ENCODE measurements at regions of chr17 and their contacts with region 1.

Region 1: DNA sequence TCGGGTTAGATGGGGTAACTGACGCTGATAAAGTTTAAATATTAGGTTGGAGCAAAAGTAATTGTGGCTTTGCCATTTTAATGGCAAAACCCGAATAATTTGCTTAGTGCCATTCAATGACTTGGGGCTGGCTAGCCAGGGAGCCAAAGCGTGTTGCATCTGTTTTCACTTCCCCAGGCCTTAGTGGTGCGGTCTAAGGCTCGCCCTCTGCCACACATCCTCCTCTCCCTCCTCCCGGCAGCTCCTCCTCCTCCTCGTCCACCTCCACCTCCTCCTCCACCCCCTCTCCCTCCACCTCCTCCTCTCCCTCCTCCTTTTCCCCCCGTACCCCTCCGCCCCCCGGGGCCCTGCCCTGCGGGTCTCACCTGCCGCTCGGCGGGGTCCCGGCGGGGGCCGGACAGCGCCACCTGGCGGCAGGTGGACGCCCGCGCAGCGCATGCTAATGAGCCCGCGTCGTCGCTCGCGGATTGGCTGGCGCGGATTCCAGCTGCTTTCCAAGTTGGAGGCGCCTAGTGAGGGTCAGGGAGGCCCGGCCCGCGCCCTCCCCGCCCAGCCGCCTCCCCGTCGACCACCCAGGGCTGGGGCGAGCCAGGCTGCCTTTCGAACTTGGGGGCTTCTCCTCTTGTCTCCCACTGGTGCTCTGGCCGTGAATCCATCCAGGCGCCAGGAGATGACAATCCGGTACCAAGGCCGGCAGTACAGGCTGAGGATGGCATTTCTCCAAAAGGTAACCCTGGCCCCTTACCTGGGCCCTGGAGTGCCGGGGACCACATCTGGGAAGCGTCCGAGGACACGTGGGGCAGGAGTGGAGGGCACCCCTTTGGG is 36.6 kb upstream of the RGS9 start:
- DNase-seq: peak; percentile 88 to 94 (median 91)
- H3K4me3 ChIP-seq: peak overlapping the region; percentile 50
- H3K27ac ChIP-seq: peak overlapping the region; percentile 41 to 69
- H3K4me1 ChIP-seq: peaks cover 3% of the 10 kb centered on the region
- H3K27me3 ChIP-seq: no peaks in the 10 kb centered on the region
- CTCF ChIP-seq: peak; percentile 86 to 96 (median 92)
- EP300 ChIP-seq: no peak
- POLR2A ChIP-seq: no peak

Region 2: GRCh38 chr17:64968652-64969501 is 131.7 kb before region 1 on chr17:
- intact Hi-C with region 1: loop called in 3 of 4 experiments (anchors 10 kb)
- DNase-seq: no peak
- H3K4me3 ChIP-seq: no peak overlapping the region
- H3K27ac ChIP-seq: no peak overlapping the region
- H3K4me1 ChIP-seq: no peaks in the 10 kb centered on the region
- H3K27me3 ChIP-seq: no peaks in the 10 kb centered on the region
- CTCF ChIP-seq: no peak
- EP300 ChIP-seq: no peak
- POLR2A ChIP-seq: no peak

Region 3: DNA sequence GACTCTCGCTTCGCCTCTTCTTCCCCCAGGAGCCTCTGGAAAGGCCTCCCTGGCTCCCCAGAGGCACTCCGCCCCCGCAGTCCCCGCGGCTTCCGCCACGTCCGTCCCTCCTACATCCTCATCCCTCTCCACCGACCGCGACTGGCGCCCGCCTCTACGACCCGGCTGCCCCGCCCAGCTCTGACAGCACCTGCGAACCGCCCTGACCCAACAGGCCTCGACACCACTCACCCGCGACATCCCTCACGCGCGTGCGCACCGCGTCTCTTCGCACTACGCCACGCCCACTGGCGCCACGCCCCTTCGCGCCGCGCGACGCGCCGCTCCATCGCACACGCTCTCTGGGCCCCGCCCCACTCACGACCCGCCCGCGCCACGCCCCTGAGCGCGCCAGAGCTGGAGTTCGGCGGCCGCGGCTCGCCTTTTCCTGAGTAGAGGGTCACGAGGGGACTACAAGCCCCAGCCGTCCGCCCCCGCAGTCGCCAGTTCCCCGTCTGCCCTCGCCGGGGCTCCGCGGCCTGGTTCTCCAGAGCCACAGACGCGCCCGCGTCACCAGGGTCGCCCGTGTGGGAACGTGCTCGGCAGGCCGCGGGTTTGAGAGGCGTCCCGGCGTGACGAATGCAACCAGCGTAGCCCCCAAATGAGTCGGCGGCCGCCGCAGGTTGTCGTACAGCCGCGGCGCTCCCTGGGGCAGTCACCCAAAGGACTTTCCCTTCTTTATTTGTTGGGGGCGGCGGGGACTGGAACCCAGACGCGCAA is 125.0 kb before region 1 on chr17:
- intact Hi-C with region 1: loop called in 2 of 4 experiments (anchors 10 kb)
- DNase-seq: peak; percentile 92 to 98 (median 96)
- H3K4me3 ChIP-seq: peak overlapping the region; percentile 47
- H3K27ac ChIP-seq: peak overlapping the region; percentile 73 to 91
- H3K4me1 ChIP-seq: peaks cover 3% of the 10 kb centered on the region
- H3K27me3 ChIP-seq: no peaks in the 10 kb centered on the region
- CTCF ChIP-seq: peak in 1 of 3 donors; percentile 21
- EP300 ChIP-seq: no peak
- POLR2A ChIP-seq: peak; percentile 90

Region 4: DNA sequence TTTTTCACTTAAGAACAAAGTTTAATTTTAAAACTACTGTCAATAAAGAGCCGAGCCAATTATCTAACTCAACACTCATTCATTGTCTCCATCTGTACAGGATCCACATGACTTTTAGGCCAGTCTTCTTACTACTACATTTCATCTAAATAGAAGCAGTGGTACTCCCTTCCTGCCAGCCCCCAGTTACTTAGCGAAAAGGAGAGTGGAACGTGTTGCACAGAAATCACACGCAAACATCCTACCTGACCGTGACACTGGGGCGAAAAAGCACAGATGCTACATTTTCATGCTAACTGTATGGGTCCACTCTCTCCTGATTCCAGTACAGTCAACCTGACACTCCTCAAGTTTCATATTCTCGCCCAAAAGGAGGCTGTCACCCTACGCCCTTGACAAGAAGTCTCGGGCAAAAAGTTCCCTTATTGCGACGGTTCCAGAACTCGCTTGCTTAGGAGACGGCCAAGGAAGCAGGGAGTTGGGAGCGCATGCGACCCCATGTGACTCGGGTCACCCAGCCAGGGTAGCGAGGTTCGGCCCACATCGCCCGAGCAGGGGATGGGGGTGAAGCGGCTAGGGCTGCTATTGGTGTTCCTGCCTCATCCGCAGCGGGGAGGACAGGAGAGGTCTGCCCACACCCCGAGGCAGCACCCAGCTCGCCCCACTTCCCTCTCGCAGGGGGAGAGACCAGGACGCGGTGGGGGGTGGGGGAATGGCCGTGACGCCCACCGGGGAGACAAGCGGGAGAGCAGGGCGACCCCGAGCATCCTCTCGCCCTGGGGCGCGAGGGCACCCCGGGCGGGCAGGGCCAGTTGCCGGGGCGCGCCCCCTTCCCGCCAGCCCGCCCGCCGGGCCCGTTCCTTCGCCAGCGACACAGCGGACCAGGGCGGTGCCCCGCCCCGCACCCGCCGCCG is 44.9 kb before region 1 on chr17:
- intact Hi-C with region 1: loop called in 3 of 4 experiments (anchors 2 to 10 kb)
- DNase-seq: peak; percentile 57 to 69 (median 67)
- H3K4me3 ChIP-seq: peak overlapping the region; percentile 92
- H3K27ac ChIP-seq: peak overlapping the region; percentile 91
- H3K4me1 ChIP-seq: peaks cover 4% of the 10 kb centered on the region
- H3K27me3 ChIP-seq: no peaks in the 10 kb centered on the region
- CTCF ChIP-seq: no peak
- EP300 ChIP-seq: no peak
- POLR2A ChIP-seq: no peak

Region 5: GRCh38 chr17:65143889-65144604 is 43.5 kb after region 1 on chr17:
- intact Hi-C with region 1: no loop called
- DNase-seq: peak in 1 of 5 donors; percentile 49
- H3K4me3 ChIP-seq: no peak overlapping the region
- H3K27ac ChIP-seq: no peak overlapping the region
- H3K4me1 ChIP-seq: peaks cover 4% of the 10 kb centered on the region
- H3K27me3 ChIP-seq: no peaks in the 10 kb centered on the region
- CTCF ChIP-seq: no peak
- EP300 ChIP-seq: no peak
- POLR2A ChIP-seq: no peak